ENCODE measurements at regions of chr16 and their contacts with region 1.

Region 1: DNA sequence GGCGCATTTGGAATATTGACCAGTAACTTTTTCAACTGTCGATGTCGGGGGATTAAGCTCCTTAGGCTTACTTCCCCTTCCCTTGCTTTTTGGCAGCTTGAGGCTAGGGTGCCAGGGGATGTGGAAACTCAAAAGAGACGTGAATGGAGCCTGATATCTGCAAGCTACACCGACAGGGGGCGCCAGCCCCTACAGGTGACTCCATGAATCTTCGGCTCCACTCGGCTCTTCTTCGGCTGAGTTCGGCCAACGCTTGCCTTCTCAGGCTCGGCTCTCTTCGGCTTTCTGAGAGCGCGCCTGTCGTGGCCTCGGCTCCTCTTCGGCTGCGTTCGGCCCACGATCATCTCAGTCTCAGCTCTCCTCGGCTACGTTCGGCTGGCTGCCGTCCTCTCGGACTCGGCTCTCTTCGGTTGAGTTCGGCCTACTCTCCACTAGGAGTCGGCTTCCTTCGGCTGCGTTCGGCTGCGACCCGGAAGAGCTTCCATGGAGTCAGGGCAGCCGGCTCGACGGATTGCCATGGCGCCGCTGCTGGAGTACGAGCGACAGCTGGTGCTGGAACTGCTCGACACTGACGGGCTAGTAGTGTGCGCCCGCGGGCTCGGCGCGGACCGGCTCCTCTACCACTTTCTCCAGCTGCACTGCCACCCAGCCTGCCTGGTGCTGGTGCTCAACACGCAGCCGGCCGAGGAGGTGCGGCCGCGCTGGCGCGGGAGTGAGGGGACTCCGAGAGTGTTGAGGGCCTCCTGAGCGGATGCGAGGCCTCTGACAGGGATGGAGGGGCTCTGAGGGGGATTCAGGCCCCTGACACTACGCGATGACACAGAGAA is at the start of gene ERCC4:
- DNase-seq: peak; percentile 93 to 99
- ATAC-seq: peak; percentile 94 to 99
- H3K4me3 ChIP-seq: peak within 1 kb of the TSS; percentile 68
- H3K27ac ChIP-seq: peak within 1 kb of the TSS; percentile 87 to 96
- H3K4me1 ChIP-seq: peaks cover 31% of the 10 kb centered on the region
- CTCF ChIP-seq: peak; percentile 90
- EP300 ChIP-seq: no peak
- POLR2A ChIP-seq: peak; percentile 93
- RAD21 ChIP-seq: peak in 1 of 2 experiments; percentile 58; a peak in 3 of 5 replicates
- polyA plus RNA-seq, gene ERCC4: 15.1 and 20.8 TPM in 2 replicates

Region 2: DNA sequence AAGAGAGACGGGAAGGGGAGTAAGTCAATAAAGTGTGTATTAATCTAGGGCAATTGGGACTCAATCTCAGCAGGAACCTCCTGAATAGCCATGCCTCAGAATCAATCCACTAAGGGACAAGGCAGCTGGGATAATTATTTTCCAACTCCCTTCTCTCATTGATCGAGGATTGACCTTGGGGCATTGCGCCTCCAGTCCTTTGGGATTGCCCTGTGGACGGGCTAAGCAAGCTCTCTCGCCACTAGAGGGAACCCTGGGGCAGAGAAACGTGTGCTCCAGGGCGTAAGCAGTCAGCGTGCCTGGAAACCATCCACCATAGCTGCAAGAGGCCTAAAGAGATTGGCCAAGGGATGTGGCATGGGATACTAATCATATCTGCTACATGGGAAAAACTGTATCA is 53.8 kb before region 1 on chr16:
- CTCF ChIA-PET with region 1: interaction called, 15 read pairs
- POLR2A ChIA-PET with region 1: no interaction called
- DNase-seq: peak; percentile 73 to 84
- ATAC-seq: peak; percentile 98 to 100
- H3K4me3 ChIP-seq: no peak overlapping the region
- H3K27ac ChIP-seq: no peak overlapping the region
- H3K4me1 ChIP-seq: no peaks in the 10 kb centered on the region
- CTCF ChIP-seq: peak; percentile 71
- EP300 ChIP-seq: no peak
- POLR2A ChIP-seq: no peak
- RAD21 ChIP-seq: peak; percentile 73 to 77

Region 3: DNA sequence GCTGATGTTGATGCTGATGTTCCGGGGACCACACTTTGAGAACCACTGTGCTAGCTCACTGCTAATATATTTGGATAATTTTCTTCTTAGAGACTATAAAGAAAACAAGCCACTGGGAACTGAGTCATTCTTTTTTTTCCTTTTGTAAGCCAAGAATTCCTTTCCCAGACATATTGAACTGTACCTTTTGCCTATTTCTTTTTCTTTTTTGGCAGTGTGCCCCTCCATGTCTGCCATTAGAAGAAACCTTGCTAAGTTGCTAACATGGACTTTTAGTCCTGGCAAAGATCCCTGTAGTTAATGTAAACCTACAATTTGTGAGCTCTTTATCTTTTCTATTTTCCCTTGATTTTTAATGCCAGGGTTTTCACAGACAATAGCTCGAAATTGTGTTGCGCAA is 17.2 kb before region 1 on chr16:
- CTCF ChIA-PET with region 1: interaction called, 47 read pairs
- POLR2A ChIA-PET with region 1: interaction called, 3 read pairs
- DNase-seq: no peak
- ATAC-seq: no peak
- H3K4me3 ChIP-seq: no peak overlapping the region
- H3K27ac ChIP-seq: no peak overlapping the region
- H3K4me1 ChIP-seq: no peaks in the 10 kb centered on the region
- CTCF ChIP-seq: no peak
- EP300 ChIP-seq: no peak
- POLR2A ChIP-seq: no peak
- RAD21 ChIP-seq: no peak

Region 4: GRCh38 chr16:13935408-13935807 is 15.5 kb after region 1 on chr16:
- CTCF ChIA-PET with region 1: interaction called, 16 read pairs
- POLR2A ChIA-PET with region 1: no interaction called
- DNase-seq: peak in 1 of 2 experiments; percentile 30
- ATAC-seq: no peak
- H3K4me3 ChIP-seq: no peak overlapping the region
- H3K27ac ChIP-seq: peak overlapping the region in 1 of 2 experiments; percentile 20; a peak in 2 of 6 replicates
- H3K4me1 ChIP-seq: peaks cover 29% of the 10 kb centered on the region
- CTCF ChIP-seq: peak; percentile 32; the same call in 2 of the 3 replicates
- EP300 ChIP-seq: no peak
- POLR2A ChIP-seq: no peak
- RAD21 ChIP-seq: no peak

Region 5: GRCh38 chr16:14240219-14240843 is 320.4 kb after region 1 on chr16:
- CTCF ChIA-PET with region 1: interaction called, 11 read pairs
- POLR2A ChIA-PET with region 1: no interaction called
- DNase-seq: no peak
- ATAC-seq: no peak
- H3K4me3 ChIP-seq: no peak overlapping the region
- H3K27ac ChIP-seq: no peak overlapping the region
- H3K4me1 ChIP-seq: no peaks in the 10 kb centered on the region
- CTCF ChIP-seq: no peak
- EP300 ChIP-seq: no peak
- POLR2A ChIP-seq: no peak
- RAD21 ChIP-seq: no peak

Region 6: DNA sequence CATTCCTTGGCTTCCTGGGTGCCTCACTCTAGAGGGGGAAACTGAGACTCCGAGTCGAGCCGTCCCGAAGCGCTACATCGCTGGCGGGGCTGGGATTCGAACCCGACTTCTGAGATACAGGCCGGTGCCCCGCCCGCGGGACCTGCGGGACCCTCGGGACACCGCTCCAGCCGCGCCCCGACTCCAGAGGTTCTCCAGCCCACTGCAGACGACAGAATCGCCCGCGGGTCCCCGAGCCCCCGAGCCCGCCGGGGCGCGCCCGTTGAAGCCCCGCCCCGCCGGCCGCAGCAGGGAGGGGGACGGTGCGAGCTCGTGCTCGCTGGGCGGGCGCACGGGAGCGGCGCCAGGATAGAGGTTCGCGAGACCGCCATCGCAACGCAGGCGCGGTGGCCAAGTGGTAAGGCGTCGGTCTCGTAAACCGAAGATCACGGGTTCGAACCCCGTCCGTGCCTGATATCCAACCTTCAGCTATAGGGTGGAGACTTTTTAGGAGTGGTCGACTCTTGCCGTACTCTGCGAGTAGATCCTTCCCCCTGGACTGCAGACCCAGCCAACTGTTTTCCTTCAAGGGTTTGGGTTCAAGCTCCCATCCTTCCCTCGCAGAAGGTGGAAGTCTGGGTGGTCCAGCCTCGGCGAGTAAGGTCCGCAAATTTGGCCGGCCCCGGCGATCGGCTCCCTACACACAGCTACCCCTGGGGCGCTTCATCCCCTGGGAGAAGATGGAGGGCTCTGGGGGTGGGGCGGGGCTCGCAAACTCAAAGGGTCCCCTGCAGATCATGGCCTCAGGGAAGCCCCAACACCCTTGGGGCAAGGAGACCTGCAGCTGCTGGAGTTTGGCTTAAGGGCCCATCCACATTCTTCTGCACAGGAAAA is 365.9 kb after region 1 on chr16:
- CTCF ChIA-PET with region 1: interaction called, 21 read pairs
- POLR2A ChIA-PET with region 1: interaction called, 9 read pairs
- DNase-seq: peak; percentile 82 to 93
- ATAC-seq: peak; percentile 83 to 87
- H3K4me3 ChIP-seq: peak overlapping the region; percentile 62
- H3K27ac ChIP-seq: peak overlapping the region; percentile 83 to 91
- H3K4me1 ChIP-seq: peaks cover 12% of the 10 kb centered on the region; the same call in 1 of the 3 replicates
- CTCF ChIP-seq: no peak
- EP300 ChIP-seq: no peak
- POLR2A ChIP-seq: peak; percentile 31; the same call in 1 of the 2 replicates
- RAD21 ChIP-seq: peak in 1 of 2 experiments; percentile 20; a peak in 1 of 5 replicates